Ascending aorta (tissue), 2 donors: ENCODE measurements at regions of chr9 and their contacts with region 1.

Region 1: DNA sequence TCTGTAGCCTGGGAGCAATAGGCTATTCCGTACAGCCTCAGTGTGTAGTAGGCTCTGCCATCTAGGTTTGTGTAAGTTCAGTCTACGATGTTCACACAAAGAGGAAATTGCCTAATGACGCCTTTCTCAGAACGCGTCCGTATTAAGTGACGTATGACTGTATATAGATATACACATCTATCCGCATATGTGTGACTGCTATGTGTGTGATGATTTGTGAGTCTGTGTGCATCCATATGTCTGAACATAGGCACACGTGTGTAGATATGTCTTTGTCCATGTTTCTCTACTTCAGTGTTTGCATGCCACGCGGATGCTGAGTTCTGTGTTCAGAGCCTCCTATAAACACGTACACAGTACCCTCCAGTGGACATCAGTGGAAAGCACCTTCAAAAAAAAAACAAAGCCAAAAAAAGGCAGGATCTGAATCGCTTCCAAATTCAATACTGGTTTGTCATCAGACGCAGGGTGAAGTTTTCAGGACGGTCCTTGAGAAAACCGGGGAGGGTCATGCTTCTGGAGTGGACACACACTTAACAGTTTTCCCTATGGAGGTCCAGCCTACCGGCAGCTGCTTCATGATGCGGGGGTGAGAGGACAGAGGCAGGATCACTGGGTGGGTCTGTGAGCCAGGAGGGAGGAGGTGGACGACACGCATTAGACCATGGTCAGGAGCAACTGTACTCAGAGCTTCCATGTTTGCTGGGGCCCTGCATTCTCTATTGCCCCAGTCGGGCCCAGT is 29.5 kb upstream of the ALDH1B1 start:
- DNase-seq: peak in 1 of 2 donors; percentile 72
- H3K4me3 ChIP-seq: peak overlapping the region in 1 of 2 donors; percentile 50
- H3K27ac ChIP-seq: no peak overlapping the region
- H3K4me1 ChIP-seq: peaks cover 0 to 3% of the 10 kb centered on the region in 2 donors
- H3K27me3 ChIP-seq: no peaks in the 10 kb centered on the region
- CTCF ChIP-seq: peak; percentile 52 to 73 (median 58)

Region 2: DNA sequence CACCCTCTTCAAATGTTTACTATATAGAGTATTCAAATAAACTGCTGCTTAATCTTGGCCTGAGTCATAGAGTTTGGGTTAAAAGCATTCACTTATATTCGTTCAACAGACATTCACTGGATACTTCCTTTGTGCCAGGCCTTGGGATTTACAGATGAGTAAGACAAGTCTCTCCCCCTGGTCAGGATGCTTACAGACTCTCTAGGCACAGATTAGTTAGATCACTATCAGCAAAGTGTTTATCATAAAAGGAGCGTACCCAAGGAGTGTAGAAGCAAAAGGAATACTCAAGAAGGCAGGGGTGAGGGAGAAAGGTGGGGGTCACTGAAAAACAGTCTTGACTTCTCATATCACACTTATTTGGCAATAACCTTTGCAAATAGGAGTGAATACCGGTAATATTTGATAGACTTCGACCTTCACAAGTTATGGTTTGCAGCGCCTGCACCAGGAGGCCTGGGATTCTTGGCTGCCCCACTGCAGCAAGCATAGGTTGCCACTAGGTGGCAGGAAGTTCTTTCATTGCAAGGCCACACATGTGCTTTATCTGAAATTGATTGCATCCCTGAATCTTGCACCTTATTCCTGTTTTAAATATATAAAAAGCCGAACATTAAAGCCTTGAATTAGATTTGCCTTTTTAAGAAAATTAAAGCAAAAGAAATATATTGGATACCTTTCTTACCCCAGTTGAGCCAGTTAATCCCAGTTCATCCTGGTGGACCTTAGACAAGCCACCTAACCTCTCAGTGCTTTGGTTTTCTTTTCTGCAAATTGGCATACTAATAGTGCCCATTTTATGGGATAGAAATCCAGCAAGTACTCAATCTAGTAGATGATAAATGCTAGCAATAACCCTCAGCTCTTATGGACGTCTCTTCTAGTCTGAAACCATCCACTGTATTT is 615.9 kb before region 1 on chr9:
- intact Hi-C with region 1: loop called (anchors 10 kb)
- DNase-seq: no peak
- H3K4me3 ChIP-seq: no peak overlapping the region
- H3K27ac ChIP-seq: no peak overlapping the region
- H3K4me1 ChIP-seq: no peaks in the 10 kb centered on the region
- H3K27me3 ChIP-seq: no peaks in the 10 kb centered on the region
- CTCF ChIP-seq: peak in 2 of 3 experiments; percentile 70 to 81

Region 3: DNA sequence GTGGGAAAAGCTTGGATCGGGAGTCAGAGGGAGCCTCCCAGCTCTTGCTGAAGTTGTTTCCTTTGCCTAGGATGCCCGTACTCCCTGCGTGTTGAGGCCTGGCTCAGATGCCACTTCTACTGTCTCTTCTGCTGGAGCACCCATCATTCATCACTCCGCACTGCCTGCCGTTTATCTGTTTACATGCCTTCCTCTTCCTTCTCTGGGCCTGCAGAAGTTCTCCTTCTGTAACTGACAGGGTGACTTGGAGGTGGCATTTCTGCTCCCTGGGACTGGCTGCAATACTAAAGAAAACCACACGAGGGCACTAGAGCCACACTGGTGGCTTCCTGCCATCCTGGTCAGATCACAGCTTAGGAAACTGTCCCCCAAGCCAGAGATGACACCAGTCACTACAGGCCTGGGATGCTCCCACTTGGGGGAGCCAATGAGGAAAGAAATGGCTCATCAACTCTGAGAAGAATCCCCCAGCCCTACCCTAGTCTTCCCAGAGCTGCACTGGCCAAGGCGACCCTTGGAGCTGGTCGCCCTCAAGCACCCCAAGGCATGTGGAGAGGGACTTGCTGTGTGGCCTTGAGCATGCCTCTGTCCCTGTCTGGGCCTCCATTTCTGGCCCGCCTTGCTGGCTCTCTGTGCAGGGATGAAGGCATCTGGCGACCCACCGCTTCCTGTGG is 449.4 kb before region 1 on chr9:
- intact Hi-C with region 1: loop called (anchors 1 kb)
- DNase-seq: peak; percentile 41 to 90
- H3K4me3 ChIP-seq: no peak overlapping the region
- H3K27ac ChIP-seq: no peak overlapping the region
- H3K4me1 ChIP-seq: no peaks in the 10 kb centered on the region
- H3K27me3 ChIP-seq: no peaks in the 10 kb centered on the region
- CTCF ChIP-seq: peak; percentile 91 to 99 (median 95)

Region 4: DNA sequence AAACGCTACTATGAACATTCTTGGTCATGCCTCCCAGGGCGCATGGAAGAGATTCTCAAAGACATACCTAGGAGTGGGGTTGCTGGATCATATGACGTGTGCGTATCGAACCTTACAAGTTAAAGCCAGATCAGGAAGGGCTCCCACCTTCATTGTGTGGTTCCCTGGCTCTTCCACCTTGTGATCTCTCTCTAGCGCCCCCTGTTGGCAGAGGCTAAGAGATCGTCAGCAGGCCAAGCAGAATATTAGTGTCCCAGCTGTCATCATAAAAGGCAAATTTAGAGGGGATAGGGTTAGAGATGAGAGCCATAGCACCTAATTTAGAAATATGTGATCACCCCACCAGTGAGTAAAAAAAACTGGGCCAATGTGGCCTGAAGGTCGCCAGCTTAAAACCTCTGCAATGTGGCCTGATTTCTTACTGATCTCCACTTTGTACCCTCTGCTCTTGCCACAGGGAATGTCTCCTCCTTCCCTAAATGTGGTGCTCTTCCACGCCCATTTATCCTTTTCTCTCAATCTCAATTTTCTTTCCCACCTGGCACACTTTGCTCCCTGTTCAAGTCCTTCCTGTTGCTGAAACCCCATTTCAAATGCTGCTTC is 202.3 kb before region 1 on chr9:
- intact Hi-C with region 1: loop called (anchors 2 kb)
- DNase-seq: peak in 1 of 2 donors; percentile 70
- H3K4me3 ChIP-seq: no peak overlapping the region
- H3K27ac ChIP-seq: no peak overlapping the region
- H3K4me1 ChIP-seq: no peaks in the 10 kb centered on the region
- H3K27me3 ChIP-seq: no peaks in the 10 kb centered on the region
- CTCF ChIP-seq: peak; percentile 57 to 70 (median 69)

Region 5: DNA sequence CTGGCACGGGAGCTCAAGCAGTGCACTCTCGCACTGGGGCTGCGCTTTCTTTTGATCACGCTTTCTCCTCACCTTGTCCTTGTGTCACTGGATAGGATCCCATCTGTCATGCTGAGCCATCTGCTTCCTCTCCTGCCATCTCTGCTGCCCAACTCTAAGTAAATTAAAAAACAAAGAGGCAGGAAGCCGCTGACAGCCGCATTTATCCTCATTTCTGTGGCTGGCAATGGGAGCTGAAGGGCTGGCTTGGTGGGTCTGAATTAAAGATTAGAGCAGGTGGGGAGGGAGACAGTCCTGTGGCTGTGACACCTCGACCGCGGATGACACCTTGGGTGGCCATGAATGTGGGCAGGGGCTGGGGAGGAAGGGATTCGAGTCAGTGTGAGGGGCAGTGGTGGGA is 129.7 kb before region 1 on chr9:
- intact Hi-C with region 1: loop called (anchors 10 kb)
- DNase-seq: no peak
- H3K4me3 ChIP-seq: no peak overlapping the region
- H3K27ac ChIP-seq: no peak overlapping the region
- H3K4me1 ChIP-seq: no peaks in the 10 kb centered on the region
- H3K27me3 ChIP-seq: no peaks in the 10 kb centered on the region
- CTCF ChIP-seq: no peak